ENCODE measurements at regions of chr12 and their contacts with region 1.

Region 1: DNA sequence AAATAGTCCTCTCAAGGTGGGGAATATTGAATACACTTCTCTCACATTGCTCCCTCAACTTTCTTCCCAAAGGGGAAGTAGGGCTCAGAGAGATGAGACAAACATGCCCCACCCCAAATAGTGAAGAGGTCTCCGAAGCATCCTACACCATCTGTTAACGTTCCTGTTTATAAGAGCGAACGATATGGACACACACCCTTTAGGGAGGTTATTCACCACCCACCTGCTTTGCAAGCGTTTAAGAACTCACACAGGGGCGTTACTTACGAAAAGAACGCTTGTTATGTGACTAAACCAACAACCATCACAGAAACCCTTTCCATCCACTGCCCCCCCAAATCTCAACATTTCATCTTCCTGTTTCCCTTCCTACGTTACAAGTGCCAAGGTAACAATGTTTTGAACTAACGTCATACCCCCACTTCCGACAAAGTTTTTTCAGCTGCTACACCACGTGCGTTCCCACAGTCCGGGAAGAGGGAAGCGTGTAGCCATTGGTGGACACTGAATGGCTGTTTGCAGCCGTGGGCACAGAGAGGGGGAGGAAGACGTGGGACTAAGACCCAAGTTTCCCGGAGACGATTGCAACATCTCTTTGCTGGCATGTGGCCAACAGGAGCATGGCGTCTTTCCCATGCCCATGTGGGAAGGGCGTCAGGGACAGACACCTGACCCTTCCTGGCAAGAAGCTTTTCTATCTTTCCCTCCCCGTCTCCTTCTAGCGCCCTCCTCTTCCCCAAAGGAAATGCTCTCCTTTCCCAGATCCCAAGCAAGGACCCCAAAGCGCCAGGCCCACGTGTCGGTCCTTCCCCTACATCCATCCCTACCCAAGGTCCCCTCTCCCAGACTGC is 1.2 kb downstream of the YBX3 start:
- DNase-seq: peak; percentile 99
- H3K4me3 Mint-ChIP-seq: peak overlapping the region; percentile 99
- H3K27ac Mint-ChIP-seq: peak overlapping the region; percentile 98
- H3K4me1 Mint-ChIP-seq: peaks cover 39% of the 10 kb centered on the region
- H3K27me3 Mint-ChIP-seq: no peaks in the 10 kb centered on the region
- CTCF ChIP-seq: no peak

Region 2: GRCh38 chr12:10453144-10453543 is 268.7 kb before region 1 on chr12 and contains the start of gene KLRC1:
- CTCF ChIA-PET with region 1: no interaction called
- POLR2A ChIA-PET with region 1: no interaction called
- intact Hi-C with region 1: no loop called
- DNase-seq: peak; percentile 64
- H3K4me3 Mint-ChIP-seq: no peak within 1 kb of the TSS
- H3K27ac Mint-ChIP-seq: no peak within 1 kb of the TSS
- H3K4me1 Mint-ChIP-seq: peaks cover 5% of the 10 kb centered on the region
- H3K27me3 Mint-ChIP-seq: no peaks in the 10 kb centered on the region
- CTCF ChIP-seq: no peak
- total RNA-seq, gene KLRC1: not detected in 2 replicates

Region 3: DNA sequence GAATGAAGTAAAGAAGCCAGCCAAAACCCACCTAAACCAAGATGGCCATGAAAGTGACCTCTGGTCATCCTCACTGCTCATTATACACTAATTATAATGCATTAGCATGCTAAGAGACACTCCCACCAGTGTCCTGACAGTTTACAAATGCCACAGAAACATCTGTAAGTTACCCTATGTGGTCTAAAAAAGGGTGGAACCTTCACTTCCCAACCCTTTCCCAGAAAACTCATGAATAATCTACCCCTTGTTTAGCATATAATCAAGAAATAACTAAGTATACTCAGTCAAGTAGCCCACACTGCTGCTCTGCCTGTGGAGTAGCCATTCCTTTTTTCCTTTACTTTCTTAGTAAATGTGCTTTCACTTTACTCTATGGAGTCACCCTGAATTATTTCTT is 67.9 kb before region 1 on chr12:
- CTCF ChIA-PET with region 1: no interaction called
- POLR2A ChIA-PET with region 1: no interaction called
- intact Hi-C with region 1: no loop called
- DNase-seq: no peak
- H3K4me3 Mint-ChIP-seq: no peak overlapping the region
- H3K27ac Mint-ChIP-seq: no peak overlapping the region
- H3K4me1 Mint-ChIP-seq: no peaks in the 10 kb centered on the region
- H3K27me3 Mint-ChIP-seq: no peaks in the 10 kb centered on the region
- CTCF ChIP-seq: no peak

Region 4: DNA sequence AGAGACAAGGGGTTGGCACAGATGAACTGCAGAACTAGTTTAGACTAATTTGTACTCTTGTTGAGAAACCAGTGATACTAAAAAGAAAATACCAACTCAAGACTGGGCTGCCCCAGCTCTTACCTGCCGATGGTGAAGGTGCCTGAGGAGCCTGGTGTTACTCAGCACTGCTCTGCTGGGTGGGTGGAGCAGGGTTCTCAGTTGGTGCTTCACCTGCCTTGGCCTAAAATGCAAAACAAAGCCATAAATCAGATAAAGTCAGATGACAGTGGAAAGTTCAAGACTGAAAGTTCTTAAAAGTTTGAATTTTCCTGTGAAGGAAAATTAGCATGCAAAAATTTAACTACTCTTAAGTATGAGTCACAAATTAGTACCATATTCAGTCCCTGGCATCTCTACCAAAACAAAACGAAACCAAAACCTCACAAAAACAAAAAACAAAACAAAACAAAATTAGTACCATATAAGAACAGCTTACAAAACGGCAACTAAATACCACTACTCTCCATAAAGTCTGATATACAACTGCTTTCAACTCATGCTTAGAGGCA is 20.7 kb before region 1 on chr12:
- CTCF ChIA-PET with region 1: interaction called, 3 read pairs
- POLR2A ChIA-PET with region 1: interaction called, 7 read pairs
- intact Hi-C with region 1: loop called (anchors 2 kb)
- DNase-seq: no peak
- H3K4me3 Mint-ChIP-seq: no peak overlapping the region
- H3K27ac Mint-ChIP-seq: no peak overlapping the region
- H3K4me1 Mint-ChIP-seq: peaks cover 18% of the 10 kb centered on the region
- H3K27me3 Mint-ChIP-seq: no peaks in the 10 kb centered on the region
- CTCF ChIP-seq: no peak

Region 5: GRCh38 chr12:10740182-10740581 is 18.3 kb after region 1 on chr12:
- CTCF ChIA-PET with region 1: interaction called, 4 read pairs
- POLR2A ChIA-PET with region 1: interaction called, 21 read pairs
- intact Hi-C with region 1: no loop called
- DNase-seq: no peak
- H3K4me3 Mint-ChIP-seq: no peak overlapping the region
- H3K27ac Mint-ChIP-seq: no peak overlapping the region
- H3K4me1 Mint-ChIP-seq: no peaks in the 10 kb centered on the region
- H3K27me3 Mint-ChIP-seq: peaks cover 6% of the 10 kb centered on the region
- CTCF ChIP-seq: no peak

Region 6: DNA sequence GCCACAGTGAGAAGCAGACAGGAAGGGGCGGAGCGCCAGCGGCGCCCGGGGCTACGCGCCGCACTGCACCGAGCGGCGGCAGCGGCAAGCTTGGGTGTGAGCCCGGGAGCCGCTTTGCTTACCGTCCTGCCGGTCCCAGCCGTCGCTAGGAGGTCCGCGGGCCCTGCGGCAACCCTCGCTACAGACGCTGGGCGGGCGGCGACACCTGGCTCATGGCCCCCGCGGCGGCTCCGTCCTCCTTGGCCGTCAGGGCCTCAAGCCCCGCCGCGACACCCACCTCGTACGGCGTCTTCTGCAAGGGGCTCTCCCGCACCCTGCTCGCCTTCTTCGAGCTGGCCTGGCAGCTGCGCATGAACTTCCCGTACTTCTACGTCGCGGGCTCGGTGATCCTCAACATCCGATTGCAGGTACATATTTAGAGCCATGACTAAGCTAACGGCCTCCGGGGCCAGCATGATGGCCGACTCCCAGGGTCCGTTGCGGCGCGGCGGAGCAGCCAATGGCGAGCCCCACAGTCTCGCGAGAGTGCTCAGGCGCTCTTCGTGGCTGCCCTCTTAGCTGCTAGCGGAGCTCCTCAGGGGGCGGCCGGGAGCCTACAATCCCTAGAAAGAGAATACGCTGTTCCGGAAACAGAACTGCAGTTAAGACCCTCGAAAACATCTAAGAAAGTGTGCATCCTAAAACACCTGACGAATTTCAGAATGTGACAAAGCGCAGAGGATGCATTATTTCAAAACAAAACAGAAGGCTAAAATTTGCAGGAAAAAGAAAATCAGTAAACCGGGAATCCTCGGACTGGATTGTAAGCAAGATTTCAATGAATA is 449.5 kb after region 1 on chr12 and contains the start of gene SMIM10L1:
- CTCF ChIA-PET with region 1: no interaction called
- POLR2A ChIA-PET with region 1: interaction called, 16 read pairs
- intact Hi-C with region 1: no loop called
- DNase-seq: peak; percentile 95
- H3K4me3 Mint-ChIP-seq: peak within 1 kb of the TSS; percentile 99
- H3K27ac Mint-ChIP-seq: peak within 1 kb of the TSS; percentile 98
- H3K4me1 Mint-ChIP-seq: peaks cover 48% of the 10 kb centered on the region
- H3K27me3 Mint-ChIP-seq: no peaks in the 10 kb centered on the region
- CTCF ChIP-seq: no peak
- total RNA-seq, gene SMIM10L1: 10.5 and 10.9 TPM in 2 replicates